Naive thymus-derived CD4-positive, alpha-beta T cell (primary cell): ENCODE measurements at regions of chr10 and their contacts with region 1.

Region 1: GRCh38 chr10:92087750-92088395 is 164.3 kb downstream of the BTAF1 start:
- DNase-seq: peak in 8 of 9 donors; percentile 26 to 58 (median 39)
- ATAC-seq: peak; percentile 95
- H3K4me3 ChIP-seq: no peak overlapping the region
- H3K4me3 Mint-ChIP-seq: no peak overlapping the region
- H3K27ac ChIP-seq: no peak overlapping the region
- H3K27ac Mint-ChIP-seq: peak overlapping the region in 1 of 9 donors; percentile 62
- H3K4me1 ChIP-seq: no peaks in the 10 kb centered on the region
- H3K4me1 Mint-ChIP-seq: peaks cover 0 to 5% (median 2%) of the 10 kb centered on the region in 7 donors
- H3K27me3 ChIP-seq: no peaks in the 10 kb centered on the region
- H3K27me3 Mint-ChIP-seq: peaks cover 0 to 1% (median 0%) of the 10 kb centered on the region in 5 donors

Region 2: DNA sequence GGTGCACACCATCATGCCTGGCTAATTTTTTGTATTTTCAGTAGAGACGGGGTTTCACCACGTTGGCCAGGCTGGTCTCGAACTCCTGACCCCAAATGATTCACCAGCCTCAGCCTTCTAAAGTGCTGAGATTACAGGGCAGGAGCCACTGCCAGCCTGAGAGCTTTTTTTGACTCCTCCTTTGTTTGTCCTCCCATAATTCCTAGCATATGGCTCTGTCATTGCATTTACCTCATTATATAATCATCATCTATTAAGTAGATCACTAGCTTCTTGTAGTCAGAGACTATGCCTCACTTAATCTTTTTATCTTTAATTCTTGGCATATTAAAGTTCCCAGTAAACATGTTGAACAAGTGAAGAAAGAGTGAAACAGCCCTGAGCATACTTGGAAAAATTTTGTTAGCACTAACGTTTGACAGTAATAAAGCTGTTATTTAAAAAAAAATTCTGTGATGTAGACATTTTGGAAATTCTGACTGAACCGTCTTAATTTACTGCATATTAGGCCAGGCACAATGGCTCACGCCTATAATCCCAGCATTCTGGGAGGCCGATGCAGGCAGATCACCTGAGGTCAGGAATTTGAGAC is 121.0 kb after region 1 on chr10:
- CTCF ChIA-PET with region 1: no interaction called
- POLR2A ChIA-PET with region 1: no interaction called
- intact Hi-C with region 1: loop called in 1 of 2 experiments (anchors 1 kb)
- DNase-seq: no peak
- ATAC-seq: no peak
- H3K4me3 ChIP-seq: no peak overlapping the region
- H3K4me3 Mint-ChIP-seq: no peak overlapping the region
- H3K27ac ChIP-seq: no peak overlapping the region
- H3K27ac Mint-ChIP-seq: no peak overlapping the region
- H3K4me1 ChIP-seq: no peaks in the 10 kb centered on the region
- H3K4me1 Mint-ChIP-seq: peaks cover 0 to 20% (median 7%) of the 10 kb centered on the region in 7 donors
- H3K27me3 ChIP-seq: no peaks in the 10 kb centered on the region
- H3K27me3 Mint-ChIP-seq: peaks cover 0 to 6% (median 0%) of the 10 kb centered on the region in 5 donors

Region 3: GRCh38 chr10:92290837-92291615 is 203.2 kb after region 1 on chr10 and contains the starts of genes CPEB3 and MARCHF5:
- CTCF ChIA-PET with region 1: interaction called, 6 read pairs
- POLR2A ChIA-PET with region 1: no interaction called
- intact Hi-C with region 1: loop called (anchors 1 kb)
- DNase-seq: peak; percentile 77 to 92 (median 85)
- ATAC-seq: peak; percentile 99
- H3K4me3 ChIP-seq: peak within 1 kb of the TSS; percentile 90
- H3K4me3 Mint-ChIP-seq: peak within 1 kb of the TSS; percentile 85 to 97 (median 95)
- H3K27ac ChIP-seq: peak within 1 kb of the TSS; percentile 90
- H3K27ac Mint-ChIP-seq: peak within 1 kb of the TSS; percentile 75 to 96 (median 88)
- H3K4me1 ChIP-seq: peaks cover 0 to 6% of the 10 kb centered on the region in 2 donors
- H3K4me1 Mint-ChIP-seq: peaks cover 21 to 41% (median 31%) of the 10 kb centered on the region in 7 donors
- H3K27me3 ChIP-seq: no peaks in the 10 kb centered on the region
- H3K27me3 Mint-ChIP-seq: no peaks in the 10 kb centered on the region
- total RNA-seq, gene CPEB3: 2.0 to 3.3 (median 2.2) TPM
- total RNA-seq, gene MARCHF5: 22.0 to 37.1 (median 33.8) TPM

Region 4: GRCh38 chr10:92432596-92432995 is 344.7 kb after region 1 on chr10:
- CTCF ChIA-PET with region 1: interaction called, 7 read pairs
- POLR2A ChIA-PET with region 1: no interaction called
- intact Hi-C with region 1: loop called in 1 of 2 experiments (anchors 1 kb)
- DNase-seq: no peak
- ATAC-seq: no peak
- H3K4me3 ChIP-seq: no peak overlapping the region
- H3K4me3 Mint-ChIP-seq: no peak overlapping the region
- H3K27ac ChIP-seq: no peak overlapping the region
- H3K27ac Mint-ChIP-seq: no peak overlapping the region
- H3K4me1 ChIP-seq: no peaks in the 10 kb centered on the region
- H3K4me1 Mint-ChIP-seq: no peaks in the 10 kb centered on the region
- H3K27me3 ChIP-seq: no peaks in the 10 kb centered on the region
- H3K27me3 Mint-ChIP-seq: no peaks in the 10 kb centered on the region

Region 5: GRCh38 chr10:92517034-92517655 is 429.3 kb after region 1 on chr10:
- CTCF ChIA-PET with region 1: no interaction called
- POLR2A ChIA-PET with region 1: no interaction called
- intact Hi-C with region 1: loop called (anchors 1 to 10 kb)
- DNase-seq: peak; percentile 18 to 74 (median 64)
- ATAC-seq: peak; percentile 98
- H3K4me3 ChIP-seq: no peak overlapping the region
- H3K4me3 Mint-ChIP-seq: no peak overlapping the region
- H3K27ac ChIP-seq: no peak overlapping the region
- H3K27ac Mint-ChIP-seq: peak overlapping the region in 3 of 9 donors; percentile 46 to 64 (median 54)
- H3K4me1 ChIP-seq: peaks cover 0 to 7% of the 10 kb centered on the region in 2 donors
- H3K4me1 Mint-ChIP-seq: peaks cover 7 to 9% (median 8%) of the 10 kb centered on the region in 7 donors
- H3K27me3 ChIP-seq: no peaks in the 10 kb centered on the region
- H3K27me3 Mint-ChIP-seq: no peaks in the 10 kb centered on the region

Region 6: GRCh38 chr10:92573798-92574547 is 486.1 kb after region 1 on chr10 and contains the start of gene IDE:
- CTCF ChIA-PET with region 1: no interaction called
- POLR2A ChIA-PET with region 1: no interaction called
- intact Hi-C with region 1: loop called (anchors 1 to 5 kb)
- DNase-seq: peak; percentile 70 to 89 (median 77)
- ATAC-seq: peak; percentile 88
- H3K4me3 ChIP-seq: peak within 1 kb of the TSS; percentile 90
- H3K4me3 Mint-ChIP-seq: peak within 1 kb of the TSS; percentile 78 to 94 (median 88)
- H3K27ac ChIP-seq: peak within 1 kb of the TSS; percentile 83
- H3K27ac Mint-ChIP-seq: peak within 1 kb of the TSS; percentile 78 to 95 (median 89)
- H3K4me1 ChIP-seq: peaks cover 12 to 14% of the 10 kb centered on the region in 2 donors
- H3K4me1 Mint-ChIP-seq: peaks cover 27 to 39% (median 38%) of the 10 kb centered on the region in 7 donors
- H3K27me3 ChIP-seq: no peaks in the 10 kb centered on the region
- H3K27me3 Mint-ChIP-seq: no peaks in the 10 kb centered on the region
- total RNA-seq, gene IDE: 20.7 to 36.7 (median 28.4) TPM